Activated T-helper 1 cell treated with anti-CD3 and anti-CD28 coated beads, Interleukin-12 subunit alpha, Interleukin-12 subunit beta, Interleukin-2, Interleukin-4 antibody, amounts not matched to agents 30 ng/mL and 10 ng/mL and 1 ng/mL, durations not matched to agents 14 hours and 24 hours and 36 hours (primary cell): ENCODE measurements at regions of chr2 and their contacts with region 1.

Region 1: DNA sequence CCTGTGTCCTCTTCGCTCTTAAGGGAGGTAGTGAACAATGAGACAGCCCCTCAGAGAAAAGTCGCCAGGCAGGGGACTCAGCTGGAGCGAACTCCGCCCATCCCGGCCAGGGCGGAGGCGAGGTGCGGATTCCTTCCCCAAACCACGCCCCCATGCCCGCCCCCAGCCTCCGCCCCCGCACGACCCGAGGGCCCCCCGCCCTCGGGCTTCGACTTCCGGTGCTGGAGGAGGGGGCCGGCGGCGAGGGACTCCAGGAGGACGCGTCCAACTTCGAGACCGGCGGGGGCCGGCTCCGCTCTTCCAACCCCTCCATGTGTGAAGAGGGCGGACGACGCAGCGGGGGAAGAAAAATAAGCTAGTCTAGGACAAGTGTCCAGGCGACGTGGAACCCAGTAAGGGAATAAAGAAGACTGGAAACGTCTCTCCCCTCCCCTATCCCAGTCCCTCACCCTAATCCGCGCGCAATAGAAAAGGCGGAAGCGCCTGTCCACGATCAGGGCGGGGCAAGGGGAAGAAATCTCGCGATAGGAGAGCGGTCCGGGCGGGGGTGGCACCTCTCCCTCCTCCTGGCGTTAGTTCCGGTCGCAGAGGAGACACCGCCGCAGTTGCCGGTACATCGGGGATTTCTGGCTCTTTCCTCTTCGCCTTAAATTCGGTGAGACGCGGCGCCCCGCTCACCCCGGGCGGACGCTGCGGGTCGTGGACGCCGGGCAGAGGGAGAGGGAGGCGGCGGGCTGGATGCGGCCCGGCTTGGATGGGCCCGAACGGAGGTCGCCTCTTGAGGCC is at the start of gene BZW1:
- DNase-seq: peak; percentile 96
- H3K4me3 Mint-ChIP-seq: peak within 1 kb of the TSS; percentile 100
- H3K27ac Mint-ChIP-seq: peak within 1 kb of the TSS; percentile 99
- H3K4me1 Mint-ChIP-seq: peaks cover 58% of the 10 kb centered on the region
- H3K27me3 Mint-ChIP-seq: no peaks in the 10 kb centered on the region
- total RNA-seq, gene BZW1: 446 and 447 TPM in 2 replicates

Region 2: DNA sequence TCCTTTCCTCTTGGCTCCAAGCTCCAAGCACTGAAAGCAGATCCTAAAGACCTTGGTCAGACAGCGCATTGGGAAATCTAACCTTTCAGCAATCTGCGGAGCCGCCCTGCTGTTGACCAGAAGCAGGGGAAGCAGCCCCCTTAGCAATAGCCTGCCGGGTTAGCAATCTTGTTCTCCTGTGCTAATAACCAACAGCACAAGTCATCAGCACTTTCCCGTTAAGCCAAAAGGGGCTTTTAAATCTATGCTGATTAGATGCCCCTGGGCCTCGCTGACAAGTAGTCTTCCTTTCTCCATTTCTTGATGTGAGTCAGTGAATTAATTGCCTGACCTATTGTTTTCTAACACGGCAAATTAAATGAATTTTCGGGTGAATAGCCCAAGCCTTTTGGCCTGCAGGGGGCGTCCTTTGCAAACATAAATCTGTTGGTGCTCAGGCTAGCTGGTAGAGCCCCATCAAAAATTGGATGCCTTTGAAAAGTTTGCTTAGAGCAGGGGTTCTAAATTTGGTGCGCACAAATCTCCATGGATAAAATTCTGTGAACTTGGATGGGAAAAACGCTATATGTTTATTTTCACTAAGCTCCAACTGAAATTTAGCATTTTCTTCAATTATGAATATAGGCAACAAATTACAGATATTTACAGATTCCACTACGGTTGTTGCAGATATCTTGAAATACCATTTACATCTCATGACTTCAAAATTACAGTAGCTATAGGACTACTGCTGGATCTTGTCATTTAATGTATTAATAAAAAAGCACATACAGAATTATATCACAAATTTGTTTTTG is 831.5 kb before region 1 on chr2:
- intact Hi-C with region 1: loop called (anchors 5 kb)
- DNase-seq: peak; percentile 62
- H3K4me3 Mint-ChIP-seq: no peak overlapping the region
- H3K27ac Mint-ChIP-seq: no peak overlapping the region
- H3K4me1 Mint-ChIP-seq: peaks cover 28% of the 10 kb centered on the region
- H3K27me3 Mint-ChIP-seq: no peaks in the 10 kb centered on the region

Region 3: DNA sequence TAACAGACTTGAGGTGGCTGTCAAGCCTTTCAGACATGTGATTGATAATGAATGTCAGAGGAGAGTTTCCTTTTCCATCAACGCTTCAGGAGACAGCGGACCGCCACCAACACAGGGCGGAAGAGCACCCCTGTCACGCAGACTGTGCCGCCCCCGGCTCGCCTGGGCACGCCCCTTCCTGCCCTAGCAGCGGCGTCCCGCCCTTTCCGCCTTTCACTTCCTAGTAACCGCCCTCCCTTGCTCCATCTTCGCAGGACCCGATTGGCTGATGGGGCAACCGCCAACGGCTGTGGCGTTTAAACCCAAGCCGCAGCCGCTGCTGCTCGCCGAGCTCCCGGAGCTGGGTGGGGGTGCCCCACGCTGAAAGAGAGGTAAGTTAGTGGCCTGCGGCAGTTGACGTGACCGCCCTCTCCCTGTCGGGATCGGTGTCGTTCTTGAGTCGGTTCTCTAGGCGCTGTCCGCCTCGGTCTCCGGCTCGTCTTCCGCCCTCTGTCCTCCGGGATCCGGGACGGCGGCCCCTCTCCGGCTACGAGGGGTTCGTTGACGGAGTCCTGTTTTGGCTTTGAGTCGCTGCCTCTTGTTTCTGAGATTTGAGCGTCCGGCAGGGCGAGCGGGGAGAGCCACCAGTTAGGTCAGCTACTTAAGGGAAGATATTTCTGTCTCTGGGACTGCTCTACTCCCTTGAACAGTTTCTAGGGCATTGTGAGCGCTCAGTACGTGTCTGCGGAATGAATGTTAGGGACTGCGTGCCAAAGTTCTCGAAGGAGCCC is 285.5 kb before region 1 on chr2 and contains the start of gene SGO2:
- intact Hi-C with region 1: loop called (anchors 1 kb)
- DNase-seq: peak; percentile 95
- H3K4me3 Mint-ChIP-seq: peak within 1 kb of the TSS; percentile 94
- H3K27ac Mint-ChIP-seq: peak within 1 kb of the TSS; percentile 89
- H3K4me1 Mint-ChIP-seq: peaks cover 32% of the 10 kb centered on the region
- H3K27me3 Mint-ChIP-seq: no peaks in the 10 kb centered on the region
- total RNA-seq, gene SGO2: 20.5 and 20.9 TPM in 2 replicates

Region 4: DNA sequence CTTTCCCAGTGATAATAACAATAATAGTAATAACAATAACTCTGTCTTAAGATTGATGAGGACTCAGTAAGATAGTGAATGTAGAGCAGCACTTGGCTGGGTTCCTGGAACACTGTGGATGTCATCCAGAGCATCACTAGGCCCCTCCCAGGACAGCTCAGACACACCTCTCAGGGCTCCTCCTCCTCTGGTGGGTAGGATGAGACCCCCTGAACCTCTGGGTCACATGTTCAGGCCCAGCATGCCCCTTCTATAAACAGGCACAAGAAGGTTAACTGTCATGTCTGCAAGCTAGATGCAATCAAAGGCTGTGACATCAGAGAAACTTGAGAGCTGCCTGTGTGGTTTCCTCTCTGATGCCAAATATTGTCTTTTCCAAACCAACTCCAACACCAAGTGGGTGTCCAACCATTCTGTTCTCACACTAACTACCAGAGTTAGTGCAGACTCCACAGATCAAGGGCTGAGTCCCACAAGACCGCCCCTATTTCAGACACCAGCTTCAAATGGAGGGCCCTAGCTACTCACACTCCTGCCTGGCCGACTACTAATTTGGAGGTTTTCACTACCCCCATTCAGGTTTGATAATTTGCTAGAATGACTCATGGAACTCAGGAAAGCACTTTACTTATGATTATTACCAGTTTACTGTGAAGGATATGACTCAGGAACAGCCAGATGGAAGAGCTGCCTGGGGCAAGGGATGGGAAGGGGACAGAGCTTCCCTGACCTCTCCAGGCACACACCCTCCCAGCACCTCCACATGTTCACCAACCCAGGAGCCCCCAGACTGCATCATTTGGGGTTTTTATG is 46.2 kb before region 1 on chr2:
- intact Hi-C with region 1: loop called (anchors 1 kb)
- DNase-seq: no peak
- H3K4me3 Mint-ChIP-seq: no peak overlapping the region
- H3K27ac Mint-ChIP-seq: peak overlapping the region; percentile 82
- H3K4me1 Mint-ChIP-seq: peaks cover 29% of the 10 kb centered on the region
- H3K27me3 Mint-ChIP-seq: no peaks in the 10 kb centered on the region

Region 5: GRCh38 chr2:201071479-201072200 is 260.1 kb after region 1 on chr2 and contains the starts of genes HYCC2 and NDUFB3:
- intact Hi-C with region 1: loop called (anchors 1 kb)
- DNase-seq: peak; percentile 90
- H3K4me3 Mint-ChIP-seq: peak within 1 kb of the TSS; percentile 90
- H3K27ac Mint-ChIP-seq: peak within 1 kb of the TSS; percentile 95
- H3K4me1 Mint-ChIP-seq: peaks cover 49% of the 10 kb centered on the region
- H3K27me3 Mint-ChIP-seq: no peaks in the 10 kb centered on the region
- total RNA-seq, gene HYCC2: 26.1 and 29.4 TPM in 2 replicates
- total RNA-seq, gene NDUFB3: 105 and 121 TPM in 2 replicates

Region 6: DNA sequence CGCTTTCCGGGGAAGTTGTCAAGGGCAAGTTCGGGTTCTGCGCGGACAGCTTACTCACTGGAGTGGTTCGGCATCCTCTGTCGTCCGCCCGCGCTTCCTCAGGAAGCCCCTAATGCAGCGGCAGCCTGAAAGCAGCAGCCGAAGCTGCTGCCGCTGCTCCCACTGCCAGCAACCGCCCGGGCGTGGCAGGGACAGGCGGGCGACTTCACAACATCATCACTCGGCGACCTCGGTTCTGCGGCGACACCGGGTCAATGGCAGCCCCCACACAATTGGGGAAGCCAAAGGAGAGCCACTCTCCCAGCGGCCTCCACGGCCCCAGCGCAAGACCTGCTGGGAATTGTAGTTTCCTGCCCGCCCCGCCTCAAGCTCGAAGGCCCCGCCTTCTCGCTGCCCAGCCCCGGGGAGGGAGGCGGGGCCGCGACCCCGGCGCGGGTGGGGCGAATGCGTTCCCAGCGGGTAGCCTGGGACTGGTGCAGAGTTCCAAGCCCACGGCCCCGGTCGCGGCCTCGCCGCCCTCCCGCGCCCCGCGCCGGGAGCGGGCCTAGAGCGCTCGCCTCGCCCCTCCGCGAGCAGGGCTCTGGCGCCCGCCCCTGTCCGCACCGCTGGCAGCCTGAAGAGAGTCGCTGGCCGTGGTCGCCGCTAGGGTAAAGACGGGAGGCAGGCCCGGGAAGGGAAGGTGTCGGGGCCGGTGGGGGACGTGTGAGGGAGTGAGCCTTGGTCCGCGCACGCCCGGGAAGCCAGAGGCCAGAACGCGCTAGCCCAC is 639.9 kb after region 1 on chr2 and contains the starts of genes STRADB and TRAK2:
- intact Hi-C with region 1: loop called (anchors 1 kb)
- DNase-seq: peak; percentile 94
- H3K4me3 Mint-ChIP-seq: peak within 1 kb of the TSS; percentile 94
- H3K27ac Mint-ChIP-seq: peak within 1 kb of the TSS; percentile 93
- H3K4me1 Mint-ChIP-seq: peaks cover 43% of the 10 kb centered on the region
- H3K27me3 Mint-ChIP-seq: peaks cover 12% of the 10 kb centered on the region
- total RNA-seq, gene STRADB: 14.6 and 18.1 TPM in 2 replicates
- total RNA-seq, gene TRAK2: 24.7 and 28.9 TPM in 2 replicates